CD4-positive, alpha-beta T cell (primary cell): ENCODE measurements at regions of chr1 and their contacts with region 1.

Region 1: DNA sequence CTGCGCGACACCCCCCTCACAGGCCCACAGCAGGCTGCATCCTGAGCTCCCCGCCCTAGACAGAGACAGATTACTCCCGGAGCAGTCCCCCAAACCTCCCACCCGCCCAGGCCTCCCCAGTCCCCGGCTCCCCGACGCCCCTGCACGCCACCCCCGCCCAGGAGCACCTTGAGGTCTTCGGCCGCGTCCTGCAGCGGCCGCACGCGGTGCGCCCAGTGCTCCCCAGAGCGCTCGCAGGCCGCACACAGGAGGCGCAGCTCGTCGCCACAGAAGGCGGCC is 709 bp downstream of the TRIM11 start:
- DNase-seq: no peak
- ATAC-seq: peak; percentile 10
- H3K4me3 ChIP-seq: peak overlapping the region; percentile 79
- H3K4me3 Mint-ChIP-seq: peak overlapping the region; percentile 96
- H3K27ac ChIP-seq: peak overlapping the region in 1 of 2 donors; percentile 39
- H3K27ac Mint-ChIP-seq: peak overlapping the region; percentile 90
- H3K4me1 ChIP-seq: peaks cover 65% of the 10 kb centered on the region
- H3K4me1 Mint-ChIP-seq: peaks cover 47% of the 10 kb centered on the region
- H3K27me3 ChIP-seq: no peaks in the 10 kb centered on the region
- H3K27me3 Mint-ChIP-seq: no peaks in the 10 kb centered on the region
- CTCF ChIP-seq: no peak

Region 2: GRCh38 chr1:227787513-227788270 is 618.2 kb before region 1 on chr1:
- CTCF ChIA-PET with region 1: no interaction called
- POLR2A ChIA-PET with region 1: no interaction called
- intact Hi-C with region 1: loop called in 1 of 2 experiments (anchors 2 kb)
- DNase-seq: peak; percentile 94 to 99 (median 96)
- ATAC-seq: peak; percentile 92
- H3K4me3 ChIP-seq: peak overlapping the region; percentile 74
- H3K4me3 Mint-ChIP-seq: peak overlapping the region; percentile 89
- H3K27ac ChIP-seq: peak overlapping the region in 1 of 2 donors; percentile 11
- H3K27ac Mint-ChIP-seq: peak overlapping the region; percentile 82
- H3K4me1 ChIP-seq: peaks cover 39% of the 10 kb centered on the region
- H3K4me1 Mint-ChIP-seq: peaks cover 34% of the 10 kb centered on the region
- H3K27me3 ChIP-seq: no peaks in the 10 kb centered on the region
- H3K27me3 Mint-ChIP-seq: no peaks in the 10 kb centered on the region
- CTCF ChIP-seq: no peak

Region 3: DNA sequence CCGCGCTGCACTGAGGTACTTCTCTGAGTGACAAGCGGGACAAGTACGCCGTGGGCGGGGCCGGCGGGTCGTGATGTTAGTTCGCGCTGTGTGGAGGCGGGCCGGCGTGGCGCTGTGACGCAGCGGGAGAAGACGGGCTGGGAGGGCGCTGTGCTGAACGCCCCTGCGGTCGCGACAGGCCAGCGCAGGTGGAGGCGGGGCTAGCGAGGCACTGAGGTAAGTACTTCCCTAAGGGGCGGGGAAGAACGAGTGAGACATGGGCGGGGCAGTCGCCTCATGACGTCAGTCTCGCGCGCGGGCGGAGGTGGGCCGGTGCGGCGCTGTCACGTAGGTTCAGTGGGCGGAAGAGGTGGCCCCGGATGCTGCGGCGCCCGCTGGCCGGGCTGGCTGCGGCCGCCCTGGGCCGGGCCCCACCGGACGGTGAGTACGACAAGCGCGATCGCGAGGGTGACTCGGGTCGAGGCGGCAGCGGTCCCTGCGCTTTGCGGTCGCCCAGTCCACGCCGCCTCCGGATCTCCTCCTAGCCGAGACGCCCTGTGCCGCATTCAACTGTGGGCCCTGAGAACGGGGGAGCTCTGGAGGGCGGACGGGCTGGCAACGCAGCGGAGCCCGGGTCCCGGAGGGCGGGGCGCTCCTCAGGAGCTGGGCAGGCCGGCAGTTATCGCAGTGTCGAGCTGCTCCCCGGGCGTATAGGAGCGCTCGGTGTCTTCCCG is 265.8 kb before region 1 on chr1 and contains the start of gene GUK1:
- CTCF ChIA-PET with region 1: no interaction called
- POLR2A ChIA-PET with region 1: no interaction called
- intact Hi-C with region 1: loop called in 1 of 2 experiments (anchors 10 kb)
- DNase-seq: peak; percentile 99 to 100 (median 100)
- ATAC-seq: peak; percentile 88
- H3K4me3 ChIP-seq: peak within 1 kb of the TSS; percentile 78
- H3K4me3 Mint-ChIP-seq: peak within 1 kb of the TSS; percentile 90
- H3K27ac ChIP-seq: peak within 1 kb of the TSS; percentile 92 to 97
- H3K27ac Mint-ChIP-seq: peak within 1 kb of the TSS; percentile 94
- H3K4me1 ChIP-seq: peaks cover 51% of the 10 kb centered on the region
- H3K4me1 Mint-ChIP-seq: peaks cover 44% of the 10 kb centered on the region
- H3K27me3 ChIP-seq: no peaks in the 10 kb centered on the region
- H3K27me3 Mint-ChIP-seq: no peaks in the 10 kb centered on the region
- CTCF ChIP-seq: no peak
- total RNA-seq, gene GUK1: 373 to 378 TPM

Region 4: GRCh38 chr1:228212966-228213844 is 192.7 kb before region 1 on chr1:
- CTCF ChIA-PET with region 1: interaction called, 3 read pairs
- POLR2A ChIA-PET with region 1: interaction called, 4 read pairs
- intact Hi-C with region 1: loop called in 1 of 2 experiments (anchors 5 kb)
- DNase-seq: peak; percentile 83 to 96 (median 90)
- ATAC-seq: peak; percentile 89
- H3K4me3 ChIP-seq: peak overlapping the region; percentile 64
- H3K4me3 Mint-ChIP-seq: peak overlapping the region; percentile 92
- H3K27ac ChIP-seq: peak overlapping the region in 1 of 2 donors; percentile 21
- H3K27ac Mint-ChIP-seq: peak overlapping the region; percentile 86
- H3K4me1 ChIP-seq: peaks cover 22% of the 10 kb centered on the region
- H3K4me1 Mint-ChIP-seq: peaks cover 12% of the 10 kb centered on the region
- H3K27me3 ChIP-seq: no peaks in the 10 kb centered on the region
- H3K27me3 Mint-ChIP-seq: no peaks in the 10 kb centered on the region
- CTCF ChIP-seq: peak; percentile 59

Region 5: DNA sequence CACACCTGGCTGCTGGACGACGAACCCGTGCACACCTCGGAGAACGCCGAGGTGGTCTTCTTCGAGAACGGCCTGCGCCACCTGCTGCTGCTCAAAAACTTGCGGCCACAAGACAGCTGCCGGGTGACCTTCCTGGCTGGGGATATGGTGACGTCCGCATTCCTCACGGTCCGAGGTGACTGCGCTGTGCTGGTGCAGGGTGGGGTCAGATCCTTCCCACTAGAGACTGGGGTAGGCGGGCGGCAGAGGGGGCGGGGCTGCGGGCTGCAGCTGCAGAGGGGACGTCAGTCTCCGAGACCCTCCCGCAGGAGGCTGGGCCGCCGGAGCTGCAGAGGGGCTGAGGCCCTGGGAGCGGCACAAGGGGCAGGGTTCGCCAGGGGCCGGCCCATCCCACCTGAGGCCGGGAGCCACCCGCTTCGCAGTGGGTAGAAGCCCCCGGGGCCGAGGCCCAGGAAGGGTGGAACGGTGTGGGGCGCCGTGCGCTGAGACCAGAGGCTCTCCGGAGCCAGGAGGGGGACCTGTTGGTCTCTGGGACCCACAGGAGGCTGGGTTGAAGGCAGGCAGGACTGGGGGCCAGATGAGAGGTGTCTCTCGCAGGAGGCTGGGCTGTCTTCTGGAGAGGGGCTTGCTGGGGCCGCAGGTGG is 89.9 kb before region 1 on chr1:
- CTCF ChIA-PET with region 1: no interaction called
- POLR2A ChIA-PET with region 1: no interaction called
- intact Hi-C with region 1: no loop called
- DNase-seq: peak in 1 of 14 experiments; percentile 23
- ATAC-seq: no peak
- H3K4me3 ChIP-seq: no peak overlapping the region
- H3K4me3 Mint-ChIP-seq: no peak overlapping the region
- H3K27ac ChIP-seq: no peak overlapping the region
- H3K27ac Mint-ChIP-seq: no peak overlapping the region
- H3K4me1 ChIP-seq: no peaks in the 10 kb centered on the region
- H3K4me1 Mint-ChIP-seq: no peaks in the 10 kb centered on the region
- H3K27me3 ChIP-seq: no peaks in the 10 kb centered on the region
- H3K27me3 Mint-ChIP-seq: no peaks in the 10 kb centered on the region
- CTCF ChIP-seq: no peak

Region 6: GRCh38 chr1:228457396-228458176 is 51.7 kb after region 1 on chr1:
- CTCF ChIA-PET with region 1: interaction called, 4 read pairs
- POLR2A ChIA-PET with region 1: interaction called, 20 read pairs
- intact Hi-C with region 1: loop called in 1 of 2 experiments (anchors 2 kb)
- DNase-seq: peak; percentile 68 to 99 (median 76)
- ATAC-seq: peak; percentile 83
- H3K4me3 ChIP-seq: peak overlapping the region; percentile 67
- H3K4me3 Mint-ChIP-seq: peak overlapping the region; percentile 95
- H3K27ac ChIP-seq: peak overlapping the region; percentile 68 to 94
- H3K27ac Mint-ChIP-seq: peak overlapping the region; percentile 98
- H3K4me1 ChIP-seq: peaks cover 30% of the 10 kb centered on the region
- H3K4me1 Mint-ChIP-seq: peaks cover 54% of the 10 kb centered on the region
- H3K27me3 ChIP-seq: no peaks in the 10 kb centered on the region
- H3K27me3 Mint-ChIP-seq: peaks cover 5% of the 10 kb centered on the region
- CTCF ChIP-seq: no peak

Region 7: DNA sequence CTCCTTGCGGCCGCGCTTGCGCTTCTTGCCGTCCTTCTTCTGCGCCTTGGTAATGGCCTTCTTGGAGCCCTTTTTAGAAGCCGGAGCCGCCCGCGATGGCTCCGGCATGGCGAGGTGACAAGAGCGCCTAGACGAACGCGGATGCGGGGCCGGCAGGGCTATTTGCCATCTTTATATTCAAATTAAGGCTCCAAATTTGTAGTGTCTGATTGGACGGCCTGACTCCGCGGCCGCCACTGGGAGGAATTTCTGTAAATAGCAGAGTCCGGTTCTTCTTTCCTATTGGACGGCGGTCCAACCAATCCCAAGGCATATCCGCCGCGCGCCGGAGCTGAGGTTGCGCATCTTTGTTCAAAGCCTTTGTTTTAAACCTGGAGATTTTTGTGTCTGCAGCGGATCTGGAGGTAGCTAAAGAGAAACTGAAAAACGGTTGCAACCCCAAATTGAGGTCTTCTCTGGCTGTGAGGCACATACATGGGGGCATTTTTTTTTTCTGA is 58.6 kb after region 1 on chr1:
- CTCF ChIA-PET with region 1: no interaction called
- POLR2A ChIA-PET with region 1: interaction called, 13 read pairs
- intact Hi-C with region 1: no loop called
- DNase-seq: peak; percentile 77 to 96 (median 84)
- ATAC-seq: peak; percentile 97
- H3K4me3 ChIP-seq: peak overlapping the region; percentile 52
- H3K4me3 Mint-ChIP-seq: peak overlapping the region; percentile 88
- H3K27ac ChIP-seq: no peak overlapping the region
- H3K27ac Mint-ChIP-seq: peak overlapping the region; percentile 77
- H3K4me1 ChIP-seq: peaks cover 35% of the 10 kb centered on the region
- H3K4me1 Mint-ChIP-seq: peaks cover 41% of the 10 kb centered on the region
- H3K27me3 ChIP-seq: peaks cover 2 to 12% of the 10 kb centered on the region in 2 experiments
- H3K27me3 Mint-ChIP-seq: peaks cover 17% of the 10 kb centered on the region
- CTCF ChIP-seq: no peak

Region 8: GRCh38 chr1:228486596-228487335 is 80.8 kb after region 1 on chr1:
- CTCF ChIA-PET with region 1: no interaction called
- POLR2A ChIA-PET with region 1: interaction called, 15 read pairs
- intact Hi-C with region 1: loop called in 1 of 2 experiments (anchors 2 kb)
- DNase-seq: peak; percentile 66 to 91 (median 78)
- ATAC-seq: peak; percentile 77
- H3K4me3 ChIP-seq: peak overlapping the region; percentile 85
- H3K4me3 Mint-ChIP-seq: peak overlapping the region; percentile 95
- H3K27ac ChIP-seq: peak overlapping the region; percentile 100
- H3K27ac Mint-ChIP-seq: peak overlapping the region; percentile 100
- H3K4me1 ChIP-seq: peaks cover 43% of the 10 kb centered on the region
- H3K4me1 Mint-ChIP-seq: peaks cover 43% of the 10 kb centered on the region
- H3K27me3 ChIP-seq: no peaks in the 10 kb centered on the region
- H3K27me3 Mint-ChIP-seq: no peaks in the 10 kb centered on the region
- CTCF ChIP-seq: no peak